GM10248 (cell line): ENCODE measurements at regions of chr1 and their contacts with region 1.

Region 1: GRCh38 chr1:94854458-94855306 is 34.5 kb downstream of the SLC44A3 start:
- DNase-seq: peak; percentile 87
- CTCF ChIP-seq: peak; percentile 92

Region 2: DNA sequence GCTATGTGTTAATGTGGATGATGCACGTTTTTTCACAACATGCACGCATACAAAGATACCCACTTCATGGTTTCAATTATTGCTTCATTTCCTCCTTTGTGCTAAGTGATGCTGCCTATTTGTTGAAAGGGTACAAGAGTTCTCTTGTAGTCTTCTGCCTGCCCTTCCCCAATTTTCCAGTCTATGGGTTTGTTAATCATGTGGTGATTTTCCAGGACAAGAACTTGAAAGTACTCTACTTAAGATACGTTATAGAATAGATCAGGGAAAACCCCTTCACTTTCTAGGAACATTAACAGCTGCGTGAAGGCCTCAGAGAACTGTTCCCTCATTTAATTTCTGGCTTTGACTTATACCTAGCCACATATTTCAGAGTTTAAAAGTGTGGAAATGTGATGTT is 86.6 kb before region 1 on chr1:
- CTCF ChIA-PET with region 1: no interaction called
- POLR2A ChIA-PET with region 1: no interaction called
- DNase-seq: no peak
- CTCF ChIP-seq: no peak

Region 3: GRCh38 chr1:94832446-94832845 is 22.2 kb before region 1 on chr1:
- CTCF ChIA-PET with region 1: interaction called, 21 read pairs
- POLR2A ChIA-PET with region 1: no interaction called
- DNase-seq: no peak
- CTCF ChIP-seq: no peak

Region 4: DNA sequence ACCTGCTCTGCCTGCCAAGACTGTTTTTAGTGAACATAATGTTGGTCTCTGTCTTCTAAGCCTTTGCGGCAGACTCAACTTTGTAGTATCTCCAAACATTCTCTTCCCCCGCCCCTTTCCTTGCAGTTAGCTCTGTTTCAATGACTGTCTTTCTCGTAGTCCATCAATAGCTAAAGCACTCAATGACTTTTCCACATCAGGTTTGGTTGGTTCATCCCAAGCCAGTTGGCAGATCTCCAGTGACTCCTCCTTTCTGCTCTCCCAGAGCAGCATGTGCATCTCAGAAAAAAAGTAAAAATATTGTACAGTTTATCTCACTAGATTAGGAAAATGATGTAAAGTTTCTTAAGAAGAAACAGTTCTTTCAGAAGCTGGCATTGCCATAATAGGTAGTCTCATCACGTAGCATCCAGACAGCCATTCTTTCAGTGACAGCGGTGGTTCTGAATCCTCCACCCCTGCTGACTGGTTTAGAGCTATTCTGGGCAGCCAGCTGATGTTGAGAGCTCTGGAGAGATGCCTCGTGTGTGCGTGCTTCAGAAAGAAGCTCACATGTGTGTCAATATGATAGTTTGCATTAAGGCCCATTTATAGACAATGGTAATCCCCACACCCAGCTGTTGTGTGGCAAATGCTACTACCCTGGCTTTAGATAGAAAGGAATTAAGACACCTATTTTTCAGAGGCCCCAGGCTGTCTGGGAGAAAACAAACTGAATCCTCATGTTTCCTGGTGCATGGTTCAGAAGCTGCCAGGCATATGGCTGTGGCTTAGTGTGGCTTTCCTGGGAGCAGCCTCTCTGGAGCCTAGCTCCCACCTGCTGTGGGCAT is 19.1 kb after region 1 on chr1:
- CTCF ChIA-PET with region 1: interaction called, 64 read pairs
- POLR2A ChIA-PET with region 1: no interaction called
- DNase-seq: no peak
- CTCF ChIP-seq: no peak

Region 5: GRCh38 chr1:95023399-95024043 is 168.8 kb after region 1 on chr1:
- CTCF ChIA-PET with region 1: interaction called, 17 read pairs
- POLR2A ChIA-PET with region 1: no interaction called
- DNase-seq: no peak
- CTCF ChIP-seq: no peak

Region 6: GRCh38 chr1:95035536-95035935 is 180.9 kb after region 1 on chr1:
- CTCF ChIA-PET with region 1: interaction called, 107 read pairs
- POLR2A ChIA-PET with region 1: no interaction called
- DNase-seq: no peak
- CTCF ChIP-seq: no peak